K562 (cell line): ENCODE measurements at regions of chr5 and their contacts with region 1.

Region 1: DNA sequence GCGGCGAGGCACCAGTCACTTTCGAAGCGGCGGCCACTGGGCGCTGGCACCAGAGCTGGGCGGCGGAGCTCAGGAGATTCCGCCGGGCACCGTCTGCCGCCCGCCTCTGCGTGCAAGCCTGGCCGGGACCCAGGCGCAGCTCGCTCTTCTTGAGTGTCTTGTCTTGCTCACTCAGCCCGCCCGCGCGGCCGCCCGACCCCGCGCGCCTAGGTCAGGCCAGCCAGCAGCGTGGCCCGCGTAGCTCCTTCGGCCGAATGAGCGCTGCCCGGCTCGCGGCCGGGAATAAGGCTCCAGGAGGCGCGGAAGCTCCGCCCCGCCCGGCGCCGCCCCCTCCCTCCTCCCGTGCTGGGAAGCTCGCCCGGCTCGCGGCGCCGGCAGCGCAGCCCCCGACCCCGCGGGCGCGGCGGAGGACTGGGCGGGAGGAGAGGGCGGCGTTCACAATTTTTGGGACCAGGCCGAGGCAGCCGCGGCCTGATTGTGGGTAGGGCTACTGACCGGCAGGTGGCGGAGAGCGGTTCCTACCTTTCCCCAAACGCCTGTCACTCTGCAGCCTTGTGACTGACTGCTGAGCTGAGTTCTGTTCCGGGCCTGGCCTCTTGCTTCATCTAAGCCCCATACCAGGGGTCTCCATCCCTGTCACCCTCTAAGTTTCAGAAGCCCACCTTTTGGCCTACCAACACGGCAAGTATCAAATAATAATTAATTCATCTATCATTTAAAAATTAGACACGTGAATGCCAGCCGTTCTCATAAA is at the start of gene HBEGF:
- DNase-seq: peak; percentile 92 to 97 (median 94)
- ATAC-seq: peak; percentile 94
- H3K4me3 ChIP-seq: peak within 1 kb of the TSS; percentile 42
- H3K27ac ChIP-seq: no peak within 1 kb of the TSS
- H3K4me1 ChIP-seq: peaks cover 13 to 23% of the 10 kb centered on the region in 2 experiments; a peak in 4 of 5 replicates
- H3K27me3 ChIP-seq: no peaks in the 10 kb centered on the region
- CTCF ChIP-seq: peak; percentile 77 to 82 (median 80)
- EP300 ChIP-seq: 0 out of 2 replicates have a peak, but pooled peaks have one; percentile 9
- POLR2A ChIP-seq: peak; percentile 49; the same call in 1 of the 2 replicates
- RAD21 ChIP-seq: peak; percentile 36 to 54; a peak in 3 of 4 replicates
- polyA plus RNA-seq, gene HBEGF: 0.11 to 0.29 TPM

Region 2: GRCh38 chr5:140336388-140336787 is 10.1 kb before region 1 on chr5:
- CTCF ChIA-PET with region 1: no interaction called
- POLR2A ChIA-PET with region 1: interaction called, 19 read pairs
- in situ Hi-C with region 1: no loop called
- intact Hi-C with region 1: no loop called
- DNase-seq: no peak
- ATAC-seq: peak; percentile 25; the same call in 1 of the 3 replicates
- H3K4me3 ChIP-seq: no peak overlapping the region
- H3K27ac ChIP-seq: no peak overlapping the region
- H3K4me1 ChIP-seq: no peaks in the 10 kb centered on the region
- H3K27me3 ChIP-seq: no peaks in the 10 kb centered on the region
- CTCF ChIP-seq: no peak; a peak in 1 of 6 replicates
- EP300 ChIP-seq: no peak
- POLR2A ChIP-seq: no peak
- RAD21 ChIP-seq: no peak